ENCODE measurements at regions of chr2 and their contacts with region 1.

Region 1: GRCh38 chr2:112749755-112750559 is 14.5 kb downstream of the CKAP2L start:
- DNase-seq: peak; percentile 76

Region 2: GRCh38 chr2:112884869-112885505 is 135.0 kb after region 1 on chr2:
- CTCF ChIA-PET with region 1: interaction called, 28 read pairs
- POLR2A ChIA-PET with region 1: no interaction called
- DNase-seq: peak; percentile 70